ENCODE measurements at regions of chr1 and their contacts with region 1.

Region 1: GRCh38 chr1:55679971-55680370 is 464.8 kb upstream of the USP24 start:
- DNase-seq: no peak
- ATAC-seq: no peak
- H3K4me3 ChIP-seq: no peak overlapping the region
- H3K27ac ChIP-seq: no peak overlapping the region
- H3K4me1 ChIP-seq: no peaks in the 10 kb centered on the region
- H3K27me3 ChIP-seq: no peaks in the 10 kb centered on the region

Region 2: GRCh38 chr1:55816456-55817426 is 136.8 kb after region 1 on chr1:
- intact Hi-C with region 1: no loop called
- DNase-seq: no peak
- ATAC-seq: no peak
- H3K4me3 ChIP-seq: no peak overlapping the region
- H3K27ac ChIP-seq: no peak overlapping the region
- H3K4me1 ChIP-seq: peaks cover 2 to 4% of the 10 kb centered on the region in 2 donors
- H3K27me3 ChIP-seq: no peaks in the 10 kb centered on the region

Region 3: GRCh38 chr1:55848906-55849305 is 168.9 kb after region 1 on chr1:
- intact Hi-C with region 1: loop called in 1 of 2 experiments (anchors 10 kb)
- DNase-seq: no peak
- ATAC-seq: no peak
- H3K4me3 ChIP-seq: no peak overlapping the region
- H3K27ac ChIP-seq: no peak overlapping the region
- H3K4me1 ChIP-seq: no peaks in the 10 kb centered on the region
- H3K27me3 ChIP-seq: no peaks in the 10 kb centered on the region